Sigmoid colon (tissue), 7 donors: ENCODE measurements at regions of chr2 and their contacts with region 1.

Region 1: GRCh38 chr2:233251306-233252116 is at the start of gene ATG16L1:
- DNase-seq: peak; percentile 98
- H3K4me3 ChIP-seq: peak within 1 kb of the TSS; percentile 92 to 99 (median 96)
- H3K27ac ChIP-seq: peak within 1 kb of the TSS; percentile 90 to 97 (median 94)
- H3K4me1 ChIP-seq: peaks cover 0 to 40% (median 33%) of the 10 kb centered on the region in 4 donors
- H3K27me3 ChIP-seq: no peaks in the 10 kb centered on the region
- CTCF ChIP-seq: peak; percentile 76 to 88 (median 84)
- EP300 ChIP-seq: peak in 2 of 4 donors; percentile 19 to 77
- POLR2A ChIP-seq: peak; percentile 77 to 83
- total RNA-seq, gene ATG16L1: 19.6 to 37.3 (median 32.4) TPM

Region 2: DNA sequence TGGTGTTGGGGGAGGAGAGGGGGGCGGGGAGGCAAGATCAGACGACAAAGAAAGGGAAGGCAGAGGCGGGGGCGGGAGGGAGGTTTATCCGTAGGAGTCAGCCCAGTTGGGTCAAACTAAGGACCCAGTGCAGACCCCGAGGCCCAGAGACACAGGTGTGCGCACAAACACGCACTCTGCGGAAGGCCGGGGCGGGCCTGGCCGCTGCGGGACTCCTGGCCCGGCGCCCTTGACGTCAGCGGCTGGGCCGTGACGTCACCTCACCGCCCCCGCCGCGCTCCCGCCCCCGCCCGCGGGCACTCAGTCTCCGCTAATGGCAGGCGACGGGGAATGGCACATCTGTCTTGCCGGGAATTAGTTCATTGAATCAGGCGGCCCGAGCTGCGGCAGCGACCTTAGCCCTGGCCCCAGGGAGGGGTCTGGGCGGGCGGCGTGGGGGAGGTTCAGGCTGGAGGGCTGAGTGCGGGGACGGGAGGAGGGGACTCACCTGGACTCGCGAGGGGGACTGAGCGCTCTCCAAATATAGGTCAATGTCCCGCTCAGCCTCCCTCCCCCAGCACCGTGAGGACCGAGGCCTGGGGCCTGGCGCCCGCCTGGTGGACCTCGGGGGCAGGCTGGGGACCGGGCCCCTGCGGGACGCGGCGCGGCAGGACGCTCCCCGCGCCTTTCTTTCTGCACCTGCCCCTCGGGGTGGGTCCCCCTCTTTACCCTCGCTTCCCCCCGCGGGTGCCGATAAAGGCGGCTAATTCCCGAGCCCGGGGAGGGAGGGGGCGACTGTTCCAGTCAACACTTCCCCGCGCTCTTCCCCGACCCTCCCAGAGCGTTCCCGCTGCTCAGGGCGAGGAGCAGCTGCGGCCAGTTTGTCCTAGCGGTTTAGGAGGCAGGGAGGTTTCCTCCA is 748.4 kb before region 1 on chr2:
- intact Hi-C with region 1: loop called (anchors 2 kb)
- DNase-seq: no peak
- H3K4me3 ChIP-seq: peak overlapping the region; percentile 44 to 63 (median 56)
- H3K27ac ChIP-seq: peak overlapping the region in 1 of 4 donors; percentile 64
- H3K4me1 ChIP-seq: peaks cover 0 to 21% (median 21%) of the 10 kb centered on the region in 4 donors
- H3K27me3 ChIP-seq: peaks cover 0 to 30% (median 5%) of the 10 kb centered on the region in 3 donors
- CTCF ChIP-seq: no peak
- EP300 ChIP-seq: no peak
- POLR2A ChIP-seq: no peak

Region 3: GRCh38 chr2:232697100-232697865 is 554.2 kb before region 1 on chr2 and contains the start of gene GIGYF2:
- intact Hi-C with region 1: loop called (anchors 5 kb)
- DNase-seq: peak; percentile 98
- H3K4me3 ChIP-seq: peak within 1 kb of the TSS; percentile 69 to 94 (median 76)
- H3K27ac ChIP-seq: peak within 1 kb of the TSS; percentile 87 to 97 (median 90)
- H3K4me1 ChIP-seq: peaks cover 0 to 43% (median 32%) of the 10 kb centered on the region in 4 donors
- H3K27me3 ChIP-seq: no peaks in the 10 kb centered on the region
- CTCF ChIP-seq: no peak
- EP300 ChIP-seq: no peak
- POLR2A ChIP-seq: no peak
- total RNA-seq, gene GIGYF2: 62.9 to 90.0 (median 74.9) TPM

Region 4: GRCh38 chr2:233098615-233099014 is 152.9 kb before region 1 on chr2:
- intact Hi-C with region 1: loop called (anchors 5 kb)
- DNase-seq: peak; percentile 39
- H3K4me3 ChIP-seq: no peak overlapping the region
- H3K27ac ChIP-seq: no peak overlapping the region
- H3K4me1 ChIP-seq: no peaks in the 10 kb centered on the region
- H3K27me3 ChIP-seq: no peaks in the 10 kb centered on the region
- CTCF ChIP-seq: no peak
- EP300 ChIP-seq: no peak
- POLR2A ChIP-seq: no peak

Region 5: DNA sequence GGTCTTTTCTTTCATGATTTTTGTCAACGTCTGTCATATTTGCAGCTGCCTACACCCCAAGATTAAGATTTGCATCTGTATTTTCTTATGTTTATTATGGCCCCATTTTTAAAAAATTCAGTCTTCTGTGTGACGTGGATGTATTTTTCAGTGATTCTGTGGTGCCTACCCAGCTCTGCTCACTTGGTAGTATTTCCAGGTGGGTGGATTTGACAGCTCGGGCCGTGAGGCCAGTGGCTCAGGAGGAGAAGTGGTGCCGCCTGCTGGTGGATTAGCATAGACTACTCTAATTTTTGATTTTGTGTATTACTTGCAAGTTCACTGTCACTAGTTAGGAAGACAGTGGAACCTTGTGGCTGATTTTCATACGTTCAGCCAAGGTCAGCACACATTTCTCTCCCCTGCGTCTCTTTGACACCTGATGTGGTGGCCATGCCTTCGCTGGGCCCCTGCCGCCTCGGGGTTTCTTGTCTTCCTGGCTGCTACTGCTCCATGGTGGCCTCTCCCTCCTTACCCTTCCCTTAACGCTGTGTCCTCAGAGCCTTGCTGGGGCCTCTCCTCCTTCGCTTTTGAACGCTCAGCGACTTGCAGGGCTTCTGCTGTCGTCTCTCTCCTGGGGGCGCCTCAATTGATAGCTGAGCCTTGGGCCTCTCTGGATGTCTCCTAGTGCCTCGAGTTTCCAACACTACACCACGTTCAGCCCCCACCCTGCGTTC is 192.1 kb after region 1 on chr2:
- intact Hi-C with region 1: loop called (anchors 5 kb)
- DNase-seq: peak; percentile 91
- H3K4me3 ChIP-seq: no peak overlapping the region
- H3K27ac ChIP-seq: no peak overlapping the region
- H3K4me1 ChIP-seq: peaks cover 0 to 9% (median 1%) of the 10 kb centered on the region in 4 donors
- H3K27me3 ChIP-seq: no peaks in the 10 kb centered on the region
- CTCF ChIP-seq: peak; percentile 74 to 93 (median 80)
- EP300 ChIP-seq: no peak
- POLR2A ChIP-seq: no peak